Kidney (tissue), 22 donors: ENCODE measurements at regions of chr5 and their contacts with region 1.

Region 1: GRCh38 chr5:142769741-142770631 is at the start of gene ARHGAP26:
- DNase-seq: peak; percentile 98 to 99 (median 98)
- H3K4me3 ChIP-seq: peak within 1 kb of the TSS; percentile 83 to 92 (median 91)
- H3K27ac ChIP-seq: peak within 1 kb of the TSS; percentile 85 to 86
- H3K4me1 ChIP-seq: peaks cover 0 to 6% (median 6%) of the 10 kb centered on the region in 3 donors
- H3K27me3 ChIP-seq: no peaks in the 10 kb centered on the region
- CTCF ChIP-seq: peak; percentile 28
- total RNA-seq, gene ARHGAP26: 85.7 TPM

Region 2: DNA sequence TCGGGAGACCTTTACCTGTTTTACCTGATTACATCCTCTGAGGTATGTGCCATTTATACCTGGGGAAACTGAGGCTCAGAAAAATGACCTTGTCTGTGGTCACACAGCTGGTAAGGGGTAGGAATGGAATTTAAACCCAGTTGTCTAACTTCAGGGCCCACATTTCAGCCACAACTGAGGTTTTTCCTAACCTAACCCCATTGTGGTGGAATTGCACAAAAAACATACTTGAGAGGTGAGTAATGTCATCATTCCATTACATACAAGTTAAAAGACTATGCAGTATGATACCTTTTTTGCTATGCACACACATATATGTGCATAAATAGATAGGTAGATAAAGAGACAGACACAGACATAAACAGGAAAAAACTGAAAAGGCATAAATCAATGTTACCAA is 98.2 kb before region 1 on chr5:
- intact Hi-C with region 1: no loop called
- DNase-seq: no peak
- H3K4me3 ChIP-seq: no peak overlapping the region
- H3K27ac ChIP-seq: no peak overlapping the region
- H3K4me1 ChIP-seq: peaks cover 0 to 3% (median 0%) of the 10 kb centered on the region in 3 donors
- H3K27me3 ChIP-seq: no peaks in the 10 kb centered on the region
- CTCF ChIP-seq: no peak

Region 3: GRCh38 chr5:142869883-142870282 is 99.9 kb after region 1 on chr5:
- intact Hi-C with region 1: loop called (anchors 10 kb)
- DNase-seq: peak in 1 of 5 donors; percentile 52
- H3K4me3 ChIP-seq: no peak overlapping the region
- H3K27ac ChIP-seq: no peak overlapping the region
- H3K4me1 ChIP-seq: peaks cover 3 to 31% (median 17%) of the 10 kb centered on the region in 3 donors
- H3K27me3 ChIP-seq: no peaks in the 10 kb centered on the region
- CTCF ChIP-seq: no peak